ENCODE measurements at regions of chr20 and their contacts with region 1.

Region 1: DNA sequence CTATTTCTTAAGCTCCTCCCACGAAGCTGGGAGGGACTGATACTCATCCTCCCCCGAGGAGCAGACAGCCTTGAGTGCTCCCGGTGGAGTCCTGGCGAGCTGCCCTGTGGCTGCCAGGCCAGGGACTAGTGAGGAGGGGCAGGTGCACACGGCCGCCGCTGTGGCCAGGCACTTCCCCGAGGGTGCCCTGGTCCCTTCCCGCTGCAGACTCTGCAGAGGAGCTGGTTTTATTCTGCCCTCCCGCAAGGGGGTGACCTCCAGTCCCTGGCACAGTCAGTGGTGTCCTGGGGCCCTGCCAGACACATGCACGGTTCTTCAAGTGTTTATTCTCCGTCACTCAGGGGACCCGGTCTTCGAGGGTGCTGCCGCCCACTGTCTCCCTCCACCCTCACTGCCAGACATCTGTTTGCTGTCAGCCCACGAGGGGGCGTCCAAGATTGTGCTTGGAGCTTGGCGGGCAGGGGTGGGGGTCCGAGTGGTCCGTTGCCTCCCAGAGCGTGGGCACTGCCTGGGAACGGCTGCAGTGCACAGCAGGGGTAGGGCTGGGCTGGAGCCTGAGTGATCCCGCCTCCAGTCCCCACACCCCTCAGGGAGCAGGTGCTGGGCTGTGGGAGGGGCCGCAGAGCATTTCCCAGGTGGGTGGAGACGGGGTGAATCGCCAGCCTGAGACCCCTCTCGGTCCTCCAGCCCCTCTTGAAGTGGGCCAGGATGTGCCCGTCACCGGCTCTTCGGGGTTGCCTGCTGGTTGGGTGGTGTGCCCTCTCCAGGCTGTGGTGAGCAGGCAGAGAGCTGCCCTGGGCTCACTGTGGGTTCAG is 3.1 kb upstream of the CABLES2 start:
- DNase-seq: no peak
- ATAC-seq: peak; percentile 28
- H3K4me3 ChIP-seq: peak overlapping the region; percentile 7 to 41; a peak in 3 of 4 replicates
- H3K27ac ChIP-seq: peak overlapping the region; percentile 30; the same call in 1 of the 2 replicates
- H3K4me1 ChIP-seq: peaks cover 29 to 40% of the 10 kb centered on the region in 2 experiments
- H3K27me3 ChIP-seq: no peaks in the 10 kb centered on the region
- CTCF ChIP-seq: peak; percentile 78 to 95 (median 79)
- POLR2A ChIP-seq: no peak
- RAD21 ChIP-seq: peak; percentile 94

Region 2: DNA sequence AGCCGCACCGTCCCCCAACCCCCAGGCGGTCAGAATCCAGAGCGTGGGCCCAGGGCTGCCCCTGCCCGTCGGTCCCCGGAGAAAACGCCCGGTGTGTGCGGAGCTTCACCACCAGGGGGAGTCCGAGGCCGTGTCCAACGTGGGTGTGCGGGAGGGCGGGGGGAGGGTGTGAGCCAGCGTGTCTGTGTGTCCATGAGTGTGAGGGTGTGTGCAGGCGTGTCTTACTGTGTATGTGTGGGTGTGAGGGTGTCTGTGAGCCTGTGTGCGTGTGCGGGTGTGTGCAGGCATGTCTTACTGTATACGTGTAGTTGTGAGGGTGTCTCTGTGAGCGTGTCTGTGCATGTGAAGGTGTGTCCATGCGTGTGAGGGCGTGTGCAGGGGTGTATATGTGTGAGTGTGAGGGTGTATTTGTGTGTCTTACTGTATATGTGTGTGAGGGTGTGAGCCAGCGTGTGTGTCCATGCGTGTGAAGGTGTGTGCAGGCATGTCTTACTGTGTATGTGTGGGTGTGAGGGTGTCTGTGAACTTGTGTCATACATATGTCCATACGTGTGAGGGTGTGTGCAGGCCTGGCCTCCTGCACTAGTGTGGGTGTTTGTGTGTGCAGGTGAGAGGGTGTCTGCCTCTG is 90.2 kb after region 1 on chr20:
- CTCF ChIA-PET with region 1: interaction called, 3 read pairs
- POLR2A ChIA-PET with region 1: no interaction called
- RAD21 ChIA-PET with region 1: no interaction called
- intact Hi-C with region 1: loop called (anchors 2 kb)
- DNase-seq: peak; percentile 21
- ATAC-seq: peak; percentile 88
- H3K4me3 ChIP-seq: no peak overlapping the region
- H3K27ac ChIP-seq: peak overlapping the region; percentile 15; the same call in 1 of the 2 replicates
- H3K4me1 ChIP-seq: peaks cover 6 to 17% of the 10 kb centered on the region in 2 experiments; a peak in 3 of 4 replicates
- H3K27me3 ChIP-seq: no peaks in the 10 kb centered on the region
- CTCF ChIP-seq: peak; percentile 82 to 95 (median 90)
- POLR2A ChIP-seq: no peak
- RAD21 ChIP-seq: peak; percentile 96

Region 3: DNA sequence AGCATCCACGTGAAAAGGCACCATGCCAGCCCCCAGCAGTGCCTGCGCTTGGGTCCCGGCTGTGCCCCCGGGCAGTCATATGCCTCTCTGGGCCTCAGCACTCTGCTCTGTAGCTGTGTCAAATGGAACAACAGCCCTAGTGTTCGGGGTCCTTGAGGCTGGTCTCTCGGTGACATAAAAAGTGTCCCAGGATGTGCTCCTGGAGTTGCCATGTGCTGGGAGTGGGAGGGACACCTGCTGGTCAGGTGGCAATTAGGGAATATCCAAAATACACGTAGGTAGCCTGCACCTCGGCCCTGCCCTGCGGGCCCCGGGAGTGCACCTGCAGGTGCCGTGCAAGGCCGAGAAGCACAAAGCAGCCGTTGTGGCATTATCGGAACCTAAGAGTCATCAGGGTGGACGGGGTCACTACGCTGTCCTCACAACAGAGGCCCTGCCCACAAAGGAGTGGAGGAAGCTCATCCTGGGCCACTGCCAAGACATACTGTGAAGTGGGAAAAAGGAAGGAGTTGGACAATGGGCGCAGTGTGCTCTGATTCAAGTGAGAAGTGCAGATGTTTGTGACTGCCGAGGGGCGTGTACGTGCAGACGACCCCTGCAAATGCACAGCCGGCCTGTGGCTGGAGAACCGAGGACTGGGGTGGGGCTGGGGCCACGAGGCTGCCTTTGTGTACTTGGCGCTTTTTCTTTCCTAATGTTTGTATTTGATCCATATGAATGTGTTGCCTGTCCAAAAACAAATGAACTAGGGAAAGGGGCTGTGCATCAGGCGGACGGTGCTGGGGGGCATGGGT is 256.8 kb after region 1 on chr20:
- CTCF ChIA-PET with region 1: no interaction called
- POLR2A ChIA-PET with region 1: no interaction called
- RAD21 ChIA-PET with region 1: no interaction called
- intact Hi-C with region 1: no loop called
- DNase-seq: no peak
- ATAC-seq: peak; percentile 24
- H3K4me3 ChIP-seq: no peak overlapping the region
- H3K27ac ChIP-seq: peak overlapping the region; percentile 48; the same call in 1 of the 2 replicates
- H3K4me1 ChIP-seq: peaks cover 6 to 24% of the 10 kb centered on the region in 2 experiments; a peak in 2 of 4 replicates
- H3K27me3 ChIP-seq: no peaks in the 10 kb centered on the region
- CTCF ChIP-seq: no peak
- POLR2A ChIP-seq: no peak
- RAD21 ChIP-seq: no peak